ENCODE measurements at regions of chr5 and their contacts with region 1.

Region 1: DNA sequence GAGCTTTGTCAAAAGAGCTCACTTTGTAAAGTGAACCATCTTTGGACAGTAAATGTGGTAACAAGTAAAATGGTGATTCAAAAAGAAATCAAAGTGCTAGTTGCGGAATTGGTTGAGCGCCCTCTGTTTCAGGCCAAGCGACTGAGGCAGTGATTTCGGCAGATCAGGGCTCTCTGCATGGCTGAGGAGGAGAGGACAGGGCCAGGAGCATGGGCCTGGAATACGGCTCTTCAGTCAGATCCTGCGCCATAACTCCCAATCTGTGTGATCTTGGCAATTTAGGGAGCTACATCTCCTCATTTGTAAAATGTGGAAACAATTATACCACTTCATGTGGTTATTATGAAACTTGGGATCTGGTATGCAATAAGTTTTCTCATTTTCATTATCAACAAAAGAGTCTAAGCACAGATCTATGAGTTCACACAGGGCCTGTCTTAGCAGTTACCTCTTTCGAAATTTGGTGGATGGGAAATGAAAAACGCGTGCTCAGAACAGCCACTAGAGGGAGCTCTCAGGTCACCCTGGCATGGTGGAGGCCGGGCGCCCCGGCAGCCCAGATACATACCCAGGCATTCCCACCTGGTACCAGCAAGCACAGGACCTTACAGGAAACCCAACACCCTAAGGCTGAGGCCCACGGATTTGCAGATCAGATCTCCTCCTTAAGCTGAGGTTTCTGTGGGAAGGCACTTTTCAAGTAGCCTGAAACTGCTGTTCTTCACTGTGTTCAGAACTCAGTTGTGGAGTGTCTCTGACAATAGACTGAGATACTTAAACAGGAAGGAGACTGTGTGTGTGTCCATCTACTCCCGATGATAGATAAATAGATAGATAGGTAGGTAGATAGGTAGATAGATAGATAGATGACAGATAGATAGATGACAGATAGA is 303.7 kb downstream of the RAB3C start:
- DNase-seq: peak; percentile 55
- H3K4me3 ChIP-seq: no peak overlapping the region
- H3K27ac ChIP-seq: no peak overlapping the region
- H3K4me1 ChIP-seq: no peaks in the 10 kb centered on the region
- H3K27me3 ChIP-seq: no peaks in the 10 kb centered on the region
- CTCF ChIP-seq: peak; percentile 94

Region 2: GRCh38 chr5:58786711-58787303 is 99.8 kb before region 1 on chr5:
- intact Hi-C with region 1: no loop called
- DNase-seq: no peak
- H3K4me3 ChIP-seq: no peak overlapping the region
- H3K27ac ChIP-seq: no peak overlapping the region
- H3K4me1 ChIP-seq: no peaks in the 10 kb centered on the region
- H3K27me3 ChIP-seq: no peaks in the 10 kb centered on the region
- CTCF ChIP-seq: no peak

Region 3: DNA sequence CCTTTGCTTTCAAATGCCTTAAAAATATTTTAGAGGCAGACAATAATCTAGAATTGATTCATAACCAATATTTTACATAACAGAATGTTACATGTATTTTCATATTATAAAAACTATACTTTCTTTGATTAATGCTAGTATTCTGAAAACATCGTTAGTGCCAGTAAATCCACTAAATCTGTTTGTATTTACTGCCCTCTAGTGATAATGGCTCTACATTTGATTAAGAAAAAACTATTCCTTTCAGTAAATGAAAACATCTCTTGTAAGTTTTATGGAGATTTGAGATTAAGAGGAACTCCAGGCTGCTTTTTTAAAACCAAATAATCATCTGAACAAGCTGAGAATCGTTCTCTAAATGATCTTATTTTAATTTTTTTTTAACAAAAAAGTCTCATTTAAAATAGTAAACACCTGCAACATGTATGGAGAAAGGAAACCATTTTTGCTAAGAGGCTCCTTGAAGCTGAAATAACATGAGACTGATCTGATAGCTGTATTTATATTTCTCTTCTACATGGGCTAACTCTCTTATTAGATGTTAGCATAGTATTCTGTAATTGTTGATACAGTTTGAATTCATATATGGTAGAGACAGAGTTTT is 121.0 kb after region 1 on chr5:
- intact Hi-C with region 1: loop called (anchors 5 kb)
- DNase-seq: no peak
- H3K4me3 ChIP-seq: no peak overlapping the region
- H3K27ac ChIP-seq: no peak overlapping the region
- H3K4me1 ChIP-seq: no peaks in the 10 kb centered on the region
- H3K27me3 ChIP-seq: no peaks in the 10 kb centered on the region
- CTCF ChIP-seq: no peak

Region 4: GRCh38 chr5:59174248-59174844 is 287.8 kb after region 1 on chr5:
- intact Hi-C with region 1: loop called (anchors 2 kb)
- DNase-seq: no peak
- H3K4me3 ChIP-seq: no peak overlapping the region
- H3K27ac ChIP-seq: no peak overlapping the region
- H3K4me1 ChIP-seq: no peaks in the 10 kb centered on the region
- H3K27me3 ChIP-seq: no peaks in the 10 kb centered on the region
- CTCF ChIP-seq: peak; percentile 78

Region 5: GRCh38 chr5:59367791-59368394 is 481.3 kb after region 1 on chr5:
- intact Hi-C with region 1: loop called (anchors 10 kb)
- DNase-seq: peak; percentile 71
- H3K4me3 ChIP-seq: no peak overlapping the region
- H3K27ac ChIP-seq: no peak overlapping the region
- H3K4me1 ChIP-seq: no peaks in the 10 kb centered on the region
- H3K27me3 ChIP-seq: no peaks in the 10 kb centered on the region
- CTCF ChIP-seq: peak; percentile 58

Region 6: DNA sequence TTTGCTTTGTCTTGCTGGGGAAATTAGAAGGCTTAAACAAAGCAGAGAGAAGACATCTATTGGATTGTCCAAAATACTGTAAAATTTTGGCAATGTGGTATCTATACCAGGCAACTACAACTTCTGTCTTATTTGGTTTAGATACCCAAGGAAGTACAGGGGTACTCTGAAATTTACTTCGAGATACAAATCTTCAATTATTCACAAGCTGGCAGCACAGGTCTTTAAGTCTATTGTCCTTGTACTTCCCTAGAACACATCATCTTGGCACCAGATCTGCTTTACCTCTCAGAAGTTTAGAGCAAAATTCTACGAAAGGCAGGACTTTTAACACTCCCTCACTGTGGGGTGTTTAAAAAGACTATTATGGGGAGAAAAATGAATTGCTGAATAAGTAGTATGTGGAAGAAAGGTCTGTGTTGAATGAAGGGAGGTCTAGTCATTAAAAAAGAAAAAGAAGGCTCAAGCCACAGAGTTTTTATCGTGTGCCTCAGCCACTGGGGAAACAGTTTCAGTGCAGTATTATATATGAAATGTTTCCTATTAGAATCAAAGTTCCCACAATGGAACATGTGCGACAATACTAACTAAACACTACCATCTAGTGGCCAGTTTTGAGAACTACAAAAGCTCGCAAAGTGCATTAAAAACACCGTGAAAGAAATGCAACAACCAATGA is 913.2 kb after region 1 on chr5:
- intact Hi-C with region 1: loop called (anchors 10 kb)
- DNase-seq: peak; percentile 38
- H3K4me3 ChIP-seq: no peak overlapping the region
- H3K27ac ChIP-seq: peak overlapping the region; percentile 31
- H3K4me1 ChIP-seq: no peaks in the 10 kb centered on the region
- H3K27me3 ChIP-seq: no peaks in the 10 kb centered on the region
- CTCF ChIP-seq: peak; percentile 84